ENCODE measurements at regions of chrX and their contacts with region 1.

Region 1: DNA sequence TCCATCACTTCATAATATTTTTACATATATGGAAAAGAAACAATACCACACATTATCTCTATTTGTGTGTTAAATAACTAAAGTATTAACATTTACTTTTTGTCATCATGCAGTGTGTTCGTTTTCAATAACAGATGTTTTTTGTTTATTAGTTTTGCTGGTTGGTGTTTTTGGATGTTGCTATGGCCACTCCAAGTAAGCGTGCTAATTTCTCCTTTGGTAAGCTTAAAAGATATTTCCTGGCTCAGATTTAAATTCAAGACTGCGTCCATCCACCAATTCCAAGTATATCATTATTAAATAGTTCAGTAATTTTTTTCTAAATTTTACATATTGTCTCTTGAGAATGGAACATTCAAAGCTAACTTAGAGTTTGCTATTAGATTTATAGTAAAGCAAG is 235.4 kb upstream of the IL1RAPL1 start:
- DNase-seq: no peak
- ATAC-seq: no peak
- H3K4me3 ChIP-seq: no peak overlapping the region
- H3K27ac ChIP-seq: no peak overlapping the region
- H3K4me1 ChIP-seq: no peaks in the 10 kb centered on the region
- H3K27me3 ChIP-seq: no peaks in the 10 kb centered on the region
- CTCF ChIP-seq: no peak

Region 2: DNA sequence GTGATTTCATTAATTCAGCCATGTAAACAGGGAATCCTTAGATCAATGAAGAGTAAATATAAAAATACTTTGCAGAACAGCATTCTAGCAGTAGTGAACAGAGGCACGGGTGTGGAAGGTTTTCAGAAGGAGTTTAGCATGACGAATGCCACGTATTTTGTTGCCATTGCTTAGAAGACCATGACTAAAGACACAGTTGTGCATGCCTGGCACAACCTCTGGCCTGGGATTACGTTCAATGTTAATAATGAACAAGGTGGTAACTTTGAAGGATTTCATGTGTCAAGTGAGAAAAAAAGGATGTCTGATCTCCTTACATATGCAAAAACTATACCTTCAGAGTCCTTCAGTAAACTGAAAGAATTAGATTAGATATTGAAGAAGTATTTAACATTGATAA is 1963.9 kb before region 1 on chrX:
- intact Hi-C with region 1: loop called in 1 of 2 experiments (anchors 5 kb)
- DNase-seq: no peak
- ATAC-seq: no peak
- H3K4me3 ChIP-seq: no peak overlapping the region
- H3K27ac ChIP-seq: no peak overlapping the region
- H3K4me1 ChIP-seq: no peaks in the 10 kb centered on the region
- H3K27me3 ChIP-seq: no peaks in the 10 kb centered on the region
- CTCF ChIP-seq: no peak

Region 3: GRCh38 chrX:28609917-28610613 is 258.3 kb after region 1 on chrX:
- intact Hi-C with region 1: no loop called
- DNase-seq: no peak
- ATAC-seq: no peak
- H3K4me3 ChIP-seq: no peak overlapping the region
- H3K27ac ChIP-seq: no peak overlapping the region
- H3K4me1 ChIP-seq: no peaks in the 10 kb centered on the region
- H3K27me3 ChIP-seq: no peaks in the 10 kb centered on the region
- CTCF ChIP-seq: no peak